ENCODE measurements at regions of chr15 and their contacts with region 1.

Region 1: GRCh38 chr15:41811432-41812195 is 16.3 kb upstream of the JMJD7 start:
- DNase-seq: peak; percentile 46
- ATAC-seq: peak; percentile 92
- H3K4me3 ChIP-seq: no peak overlapping the region
- H3K27ac ChIP-seq: no peak overlapping the region
- H3K4me1 ChIP-seq: peaks cover 6 to 12% of the 10 kb centered on the region in 2 experiments; a peak in 3 of 4 replicates
- H3K27me3 ChIP-seq: no peaks in the 10 kb centered on the region
- CTCF ChIP-seq: peak; percentile 90 to 94 (median 91)
- POLR2A ChIP-seq: no peak
- RAD21 ChIP-seq: peak; percentile 95

Region 2: GRCh38 chr15:41465822-41466421 is 345.7 kb before region 1 on chr15:
- CTCF ChIA-PET with region 1: interaction called, 28 read pairs
- POLR2A ChIA-PET with region 1: no interaction called
- RAD21 ChIA-PET with region 1: interaction called, 3 read pairs
- intact Hi-C with region 1: loop called (anchors 1 kb)
- DNase-seq: peak; percentile 45
- ATAC-seq: peak; percentile 80
- H3K4me3 ChIP-seq: no peak overlapping the region
- H3K27ac ChIP-seq: no peak overlapping the region
- H3K4me1 ChIP-seq: no peaks in the 10 kb centered on the region
- H3K27me3 ChIP-seq: no peaks in the 10 kb centered on the region
- CTCF ChIP-seq: peak; percentile 84 to 99 (median 98)
- POLR2A ChIP-seq: no peak
- RAD21 ChIP-seq: peak; percentile 90

Region 3: DNA sequence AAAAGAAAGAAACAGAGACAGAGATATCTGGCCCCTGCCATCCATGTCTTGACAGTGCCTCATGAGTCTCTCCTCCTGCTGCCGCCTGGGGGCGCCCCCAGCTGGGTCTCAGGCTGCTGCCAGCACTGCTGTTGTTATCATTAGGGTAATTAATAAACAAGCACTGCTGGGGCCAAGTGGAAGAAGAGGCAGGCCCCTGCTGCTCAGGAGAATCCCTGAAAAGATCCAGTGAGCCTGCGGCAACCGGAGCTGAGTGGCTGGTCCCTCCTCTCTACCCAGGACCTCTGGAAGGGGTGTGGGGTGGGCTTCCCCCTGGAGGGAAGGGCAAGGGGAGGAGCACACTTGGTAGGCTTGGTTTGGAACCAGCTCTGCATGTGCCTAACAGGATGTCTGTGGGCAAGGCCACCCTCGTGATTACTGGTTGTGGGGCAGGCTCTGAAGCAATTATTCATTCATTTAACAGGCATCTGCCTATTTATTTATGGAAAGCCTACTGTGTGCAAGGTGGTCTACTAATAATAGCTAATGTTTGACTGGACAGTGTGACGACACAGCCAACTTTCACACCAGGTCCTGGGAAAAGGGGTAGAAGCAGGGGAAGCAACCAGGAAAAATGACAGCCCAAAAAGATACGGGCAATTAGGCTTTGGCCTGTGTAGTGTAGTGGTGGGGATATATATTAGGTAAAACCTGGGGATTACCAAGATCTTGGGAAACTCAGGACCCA is 253.8 kb before region 1 on chr15:
- CTCF ChIA-PET with region 1: interaction called, 6 read pairs
- POLR2A ChIA-PET with region 1: interaction called, 3 read pairs
- RAD21 ChIA-PET with region 1: interaction called in 1 of 2 experiments, 7 read pairs
- intact Hi-C with region 1: loop called (anchors 1 kb)
- DNase-seq: peak; percentile 52
- ATAC-seq: peak; percentile 77
- H3K4me3 ChIP-seq: peak overlapping the region; percentile 67 to 68
- H3K27ac ChIP-seq: peak overlapping the region; percentile 50; the same call in 1 of the 2 replicates
- H3K4me1 ChIP-seq: peaks cover 7 to 21% of the 10 kb centered on the region in 2 experiments; a peak in 3 of 4 replicates
- H3K27me3 ChIP-seq: no peaks in the 10 kb centered on the region
- CTCF ChIP-seq: peak; percentile 75 to 98 (median 97); a peak in 5 of 6 replicates
- POLR2A ChIP-seq: no peak
- RAD21 ChIP-seq: peak; percentile 80

Region 4: DNA sequence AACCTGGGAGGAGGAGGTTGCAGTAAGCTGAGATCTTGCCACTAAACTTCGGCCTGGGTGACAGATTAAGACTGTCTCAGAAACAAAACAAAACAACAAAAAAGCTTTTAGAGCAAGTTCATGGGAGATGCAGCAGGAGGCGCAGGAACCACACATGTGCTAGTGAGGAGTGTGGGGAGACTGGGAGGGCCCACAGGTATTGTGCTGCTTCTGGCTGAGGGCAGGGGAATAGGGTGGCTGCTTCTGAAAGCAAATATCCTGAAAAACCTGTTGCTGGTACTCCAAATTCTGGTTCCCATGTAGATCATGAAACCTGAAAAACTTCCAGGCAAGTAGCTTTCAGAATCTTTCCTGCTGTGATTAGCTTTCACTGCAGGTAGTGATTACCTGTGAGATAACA is 230.5 kb before region 1 on chr15:
- CTCF ChIA-PET with region 1: no interaction called
- POLR2A ChIA-PET with region 1: no interaction called
- RAD21 ChIA-PET with region 1: no interaction called
- intact Hi-C with region 1: loop called (anchors 1 kb)
- DNase-seq: peak; percentile 19
- ATAC-seq: peak; percentile 81
- H3K4me3 ChIP-seq: no peak overlapping the region
- H3K27ac ChIP-seq: no peak overlapping the region
- H3K4me1 ChIP-seq: no peaks in the 10 kb centered on the region; a peak in 1 of 4 replicates
- H3K27me3 ChIP-seq: no peaks in the 10 kb centered on the region
- CTCF ChIP-seq: peak; percentile 32 to 56 (median 53); a peak in 3 of 6 replicates
- POLR2A ChIP-seq: no peak
- RAD21 ChIP-seq: peak; percentile 73

Region 5: DNA sequence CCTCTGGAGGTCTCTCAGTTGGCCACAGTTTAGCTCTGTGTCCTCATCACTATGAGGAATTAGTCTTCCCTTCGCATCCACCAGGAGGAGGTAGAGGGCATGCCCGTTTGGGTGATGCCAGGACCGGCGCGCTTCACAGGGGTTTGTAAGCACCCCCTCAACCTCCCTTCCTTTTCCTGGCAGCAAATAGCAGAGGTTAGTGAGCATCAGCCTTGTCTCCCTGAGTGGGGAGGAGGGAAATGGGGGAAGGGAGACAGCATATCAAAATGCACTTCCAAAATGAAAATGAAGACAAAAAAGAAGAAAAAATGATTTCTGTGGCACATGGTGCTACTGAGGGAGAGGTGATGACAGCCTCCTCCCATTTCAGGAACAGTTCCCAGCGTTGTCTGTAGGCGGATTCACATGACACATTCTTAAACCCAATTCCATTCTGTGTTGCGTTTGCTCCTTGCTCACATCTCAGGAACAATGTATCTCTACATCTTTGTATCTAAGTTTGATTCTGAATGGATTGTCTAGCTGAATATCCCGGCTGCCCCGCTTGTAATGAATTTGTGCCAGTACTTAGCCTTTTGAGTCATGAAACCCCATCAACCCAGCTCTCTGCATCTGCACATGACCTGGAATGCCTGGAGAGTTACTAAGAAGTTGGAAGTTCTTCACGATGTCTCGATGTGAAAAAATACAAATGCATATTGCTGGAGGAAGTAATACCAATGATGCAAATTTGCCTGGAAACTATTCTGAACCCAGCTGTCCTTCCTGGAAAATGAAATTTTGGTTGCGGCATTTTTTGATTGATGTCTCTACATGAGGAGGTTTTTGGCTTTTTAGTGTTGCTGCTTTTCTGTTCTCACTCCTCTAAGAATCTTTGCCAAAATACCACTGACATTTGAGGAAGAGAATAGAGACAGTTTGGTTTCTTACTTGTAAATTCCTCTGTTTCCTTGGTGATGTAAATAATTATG is 207.4 kb before region 1 on chr15:
- CTCF ChIA-PET with region 1: interaction called, 21 read pairs
- POLR2A ChIA-PET with region 1: interaction called, 5 read pairs
- RAD21 ChIA-PET with region 1: interaction called, 3 to 4 read pairs
- intact Hi-C with region 1: loop called (anchors 1 kb)
- DNase-seq: peak; percentile 70
- ATAC-seq: peak; percentile 97
- H3K4me3 ChIP-seq: peak overlapping the region; percentile 33 to 44
- H3K27ac ChIP-seq: no peak overlapping the region
- H3K4me1 ChIP-seq: peaks cover 4 to 32% of the 10 kb centered on the region in 2 experiments; a peak in 3 of 4 replicates
- H3K27me3 ChIP-seq: no peaks in the 10 kb centered on the region
- CTCF ChIP-seq: peak; percentile 76 to 90 (median 83)
- POLR2A ChIP-seq: no peak
- RAD21 ChIP-seq: peak; percentile 75

Region 6: GRCh38 chr15:41671656-41672648 is 139.7 kb before region 1 on chr15:
- CTCF ChIA-PET with region 1: no interaction called
- POLR2A ChIA-PET with region 1: no interaction called
- RAD21 ChIA-PET with region 1: no interaction called
- intact Hi-C with region 1: no loop called
- DNase-seq: no peak
- ATAC-seq: no peak
- H3K4me3 ChIP-seq: no peak overlapping the region
- H3K27ac ChIP-seq: no peak overlapping the region
- H3K4me1 ChIP-seq: no peaks in the 10 kb centered on the region
- H3K27me3 ChIP-seq: no peaks in the 10 kb centered on the region
- CTCF ChIP-seq: no peak
- POLR2A ChIP-seq: no peak
- RAD21 ChIP-seq: no peak

Region 7: GRCh38 chr15:41695750-41696426 is 115.7 kb before region 1 on chr15:
- CTCF ChIA-PET with region 1: interaction called, 4 read pairs
- POLR2A ChIA-PET with region 1: no interaction called
- RAD21 ChIA-PET with region 1: no interaction called
- intact Hi-C with region 1: loop called (anchors 2 kb)
- DNase-seq: peak; percentile 24
- ATAC-seq: peak; percentile 82
- H3K4me3 ChIP-seq: no peak overlapping the region
- H3K27ac ChIP-seq: no peak overlapping the region
- H3K4me1 ChIP-seq: no peaks in the 10 kb centered on the region
- H3K27me3 ChIP-seq: no peaks in the 10 kb centered on the region
- CTCF ChIP-seq: peak in 2 of 3 experiments; percentile 51 to 52; a peak in 4 of 6 replicates
- POLR2A ChIP-seq: no peak
- RAD21 ChIP-seq: peak; percentile 53

Region 8: GRCh38 chr15:41749526-41749925 is 62.1 kb before region 1 on chr15:
- CTCF ChIA-PET with region 1: no interaction called
- POLR2A ChIA-PET with region 1: no interaction called
- RAD21 ChIA-PET with region 1: no interaction called
- intact Hi-C with region 1: no loop called
- DNase-seq: no peak
- ATAC-seq: no peak
- H3K4me3 ChIP-seq: no peak overlapping the region
- H3K27ac ChIP-seq: no peak overlapping the region
- H3K4me1 ChIP-seq: no peaks in the 10 kb centered on the region
- H3K27me3 ChIP-seq: no peaks in the 10 kb centered on the region
- CTCF ChIP-seq: no peak
- POLR2A ChIP-seq: no peak
- RAD21 ChIP-seq: no peak

Region 9: GRCh38 chr15:41989259-41989933 is 177.8 kb after region 1 on chr15:
- CTCF ChIA-PET with region 1: no interaction called
- POLR2A ChIA-PET with region 1: no interaction called
- RAD21 ChIA-PET with region 1: no interaction called
- intact Hi-C with region 1: no loop called
- DNase-seq: peak; percentile 55
- ATAC-seq: peak; percentile 99
- H3K4me3 ChIP-seq: no peak overlapping the region
- H3K27ac ChIP-seq: no peak overlapping the region
- H3K4me1 ChIP-seq: no peaks in the 10 kb centered on the region
- H3K27me3 ChIP-seq: no peaks in the 10 kb centered on the region
- CTCF ChIP-seq: peak; percentile 95 to 98 (median 96)
- POLR2A ChIP-seq: no peak
- RAD21 ChIP-seq: peak; percentile 99

Measured in HCT116 (cell line).